AG04450 (cell line): ENCODE measurements at regions of chr7 and their contacts with region 1.

Region 1: GRCh38 chr7:86926732-86927131 is 132.7 kb downstream of the ELAPOR2 start:
- DNase-seq: no peak
- H3K4me3 ChIP-seq: no peak overlapping the region
- H3K27ac ChIP-seq: no peak overlapping the region
- H3K27me3 ChIP-seq: no peaks in the 10 kb centered on the region
- CTCF ChIP-seq: peak; percentile 77

Region 2: DNA sequence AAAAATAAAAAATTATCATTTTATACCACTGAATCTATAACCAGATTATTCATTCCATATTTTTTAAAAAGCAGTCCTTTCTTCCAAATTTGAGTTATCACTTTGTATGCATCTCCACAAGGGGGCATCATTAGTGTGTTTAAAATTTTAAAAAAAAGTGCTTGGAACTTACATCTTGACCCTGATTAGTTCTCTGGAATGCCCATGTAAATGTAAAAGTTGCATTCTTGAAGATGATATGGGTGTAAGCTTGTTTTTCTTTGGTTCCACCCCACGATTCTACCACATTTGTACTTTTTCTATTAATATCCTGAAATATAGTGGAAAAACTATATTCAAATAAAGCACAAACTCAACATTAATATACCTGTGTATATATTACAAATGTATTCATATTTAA is 12.2 kb before region 1 on chr7:
- CTCF ChIA-PET with region 1: interaction called, 10 read pairs
- POLR2A ChIA-PET with region 1: no interaction called
- DNase-seq: no peak
- H3K4me3 ChIP-seq: no peak overlapping the region
- H3K27ac ChIP-seq: no peak overlapping the region
- H3K27me3 ChIP-seq: no peaks in the 10 kb centered on the region
- CTCF ChIP-seq: peak; percentile 58

Region 3: GRCh38 chr7:87152107-87152844 is 225.5 kb after region 1 on chr7 and contains the start of gene DMTF1:
- CTCF ChIA-PET with region 1: interaction called, 58 read pairs
- POLR2A ChIA-PET with region 1: no interaction called
- DNase-seq: peak; percentile 83
- H3K4me3 ChIP-seq: peak within 1 kb of the TSS; percentile 81
- H3K27ac ChIP-seq: peak within 1 kb of the TSS; percentile 96
- H3K27me3 ChIP-seq: no peaks in the 10 kb centered on the region
- CTCF ChIP-seq: no peak
- polyA plus RNA-seq, gene DMTF1: 95.7 and 134 TPM in 2 replicates

Region 4: DNA sequence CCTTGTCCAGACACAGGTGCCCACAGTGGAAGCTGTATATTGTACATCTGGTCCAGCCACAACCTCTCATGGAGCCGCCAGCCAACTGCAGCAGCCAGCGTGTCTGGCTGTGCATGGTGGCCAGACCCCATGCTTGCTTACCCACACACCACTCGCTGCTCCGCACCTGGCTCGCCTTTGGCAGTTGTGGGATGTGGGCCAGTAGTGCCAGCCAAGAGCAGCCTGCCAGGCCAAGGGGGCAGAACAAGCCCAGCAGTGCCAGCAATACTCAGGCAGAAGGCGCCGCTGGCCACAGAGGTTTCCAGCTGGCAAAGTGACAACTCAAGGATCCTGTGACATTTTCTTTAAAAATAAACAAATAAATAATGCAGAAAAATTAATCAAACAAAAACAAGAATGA is 304.5 kb after region 1 on chr7:
- CTCF ChIA-PET with region 1: interaction called, 31 read pairs
- POLR2A ChIA-PET with region 1: no interaction called
- DNase-seq: no peak
- H3K4me3 ChIP-seq: no peak overlapping the region
- H3K27ac ChIP-seq: no peak overlapping the region
- H3K27me3 ChIP-seq: peaks cover 9% of the 10 kb centered on the region
- CTCF ChIP-seq: no peak

Region 5: DNA sequence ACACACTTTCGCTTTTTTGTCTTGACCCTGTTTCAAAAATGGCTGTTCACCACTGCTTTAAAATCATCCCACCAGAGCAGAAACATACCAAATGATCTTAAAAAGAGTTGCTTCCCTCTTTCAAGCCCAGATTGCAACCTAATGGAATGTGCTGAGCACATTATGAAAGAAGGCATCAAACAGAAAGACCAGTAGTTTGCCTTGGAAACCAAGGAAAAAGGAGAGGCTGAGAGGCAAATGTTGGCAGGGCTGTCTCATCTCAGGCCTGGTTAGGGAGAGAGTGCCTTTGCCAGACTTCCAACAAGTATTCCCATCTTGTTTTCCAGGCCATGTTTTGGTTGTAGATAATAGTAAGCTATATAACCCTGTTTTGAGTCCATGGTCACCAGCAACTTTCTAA is 484.5 kb after region 1 on chr7:
- CTCF ChIA-PET with region 1: interaction called, 10 read pairs
- POLR2A ChIA-PET with region 1: no interaction called
- DNase-seq: no peak
- H3K4me3 ChIP-seq: no peak overlapping the region
- H3K27ac ChIP-seq: no peak overlapping the region
- H3K27me3 ChIP-seq: no peaks in the 10 kb centered on the region
- CTCF ChIP-seq: no peak